HCT116 (cell line): ENCODE measurements at regions of chr5 and their contacts with region 1.

Region 1: DNA sequence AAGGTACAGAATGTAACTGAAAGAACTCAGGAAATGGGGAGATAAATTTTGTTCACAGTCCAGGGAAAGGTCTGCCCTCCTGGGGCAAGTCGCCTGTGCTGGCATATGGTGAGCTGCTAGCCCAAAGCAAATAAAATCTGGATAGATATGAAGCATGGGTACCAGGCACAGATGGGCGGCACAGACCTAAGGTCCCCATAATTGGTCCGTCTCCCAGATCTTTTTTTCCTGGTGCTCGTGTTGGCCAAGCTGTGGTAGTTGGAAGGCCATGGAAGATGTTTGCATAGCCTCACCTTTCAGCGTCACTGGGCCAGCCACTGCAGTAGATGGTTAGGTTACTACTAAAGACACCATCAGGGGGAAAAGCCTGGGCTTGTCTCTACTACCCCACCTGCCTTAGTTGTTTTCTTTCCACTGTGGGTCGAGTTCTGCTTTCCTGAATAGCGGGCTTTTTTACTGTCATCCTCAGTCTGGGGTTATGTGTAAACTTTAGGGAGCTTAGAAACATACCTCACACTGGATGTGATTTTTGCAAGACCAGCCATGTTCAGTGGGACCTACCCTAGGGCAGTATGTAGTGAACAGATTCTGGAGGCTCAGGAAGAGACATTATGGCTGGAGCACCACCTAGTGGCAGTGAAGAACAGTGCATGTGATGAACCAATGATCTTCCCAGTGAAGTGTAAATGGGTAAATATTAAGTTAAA is 24.2 kb upstream of the GLRX start:
- DNase-seq: no peak
- ATAC-seq: peak; percentile 96
- H3K4me3 ChIP-seq: no peak overlapping the region
- H3K27ac ChIP-seq: no peak overlapping the region
- H3K4me1 ChIP-seq: 0 out of 4 replicates have a peak, but pooled peaks cover 0 to 5% of the 10 kb centered on the region in 2 experiments
- H3K27me3 ChIP-seq: no peaks in the 10 kb centered on the region
- CTCF ChIP-seq: peak; percentile 85 to 98 (median 95)
- POLR2A ChIP-seq: no peak
- RAD21 ChIP-seq: peak; percentile 97

Region 2: GRCh38 chr5:94968507-94969095 is 878.1 kb before region 1 on chr5:
- CTCF ChIA-PET with region 1: interaction called, 3 read pairs
- POLR2A ChIA-PET with region 1: no interaction called
- RAD21 ChIA-PET with region 1: no interaction called
- intact Hi-C with region 1: loop called (anchors 1 kb)
- DNase-seq: peak; percentile 69
- ATAC-seq: peak; percentile 83
- H3K4me3 ChIP-seq: no peak overlapping the region
- H3K27ac ChIP-seq: no peak overlapping the region
- H3K4me1 ChIP-seq: no peaks in the 10 kb centered on the region; a peak in 1 of 4 replicates
- H3K27me3 ChIP-seq: no peaks in the 10 kb centered on the region
- CTCF ChIP-seq: peak; percentile 64 to 75 (median 73); a peak in 5 of 6 replicates
- POLR2A ChIP-seq: no peak
- RAD21 ChIP-seq: peak; percentile 79

Region 3: GRCh38 chr5:95283761-95284415 is 562.8 kb before region 1 on chr5:
- CTCF ChIA-PET with region 1: no interaction called
- POLR2A ChIA-PET with region 1: no interaction called
- RAD21 ChIA-PET with region 1: no interaction called
- intact Hi-C with region 1: loop called (anchors 10 kb)
- DNase-seq: no peak
- ATAC-seq: peak; percentile 63
- H3K4me3 ChIP-seq: peak overlapping the region; percentile 43 to 57
- H3K27ac ChIP-seq: no peak overlapping the region; the same call in 1 of the 2 replicates
- H3K4me1 ChIP-seq: peaks cover 5 to 25% of the 10 kb centered on the region in 2 experiments; a peak in 2 of 4 replicates
- H3K27me3 ChIP-seq: no peaks in the 10 kb centered on the region
- CTCF ChIP-seq: peak; percentile 12 to 33 (median 17); a peak in 3 of 6 replicates
- POLR2A ChIP-seq: no peak
- RAD21 ChIP-seq: peak; percentile 34; the same call in 1 of the 2 replicates

Region 4: GRCh38 chr5:95554647-95555548 is 291.8 kb before region 1 on chr5 and contains the starts of genes ARSK and SKIC3:
- CTCF ChIA-PET with region 1: no interaction called
- POLR2A ChIA-PET with region 1: no interaction called
- RAD21 ChIA-PET with region 1: no interaction called
- intact Hi-C with region 1: loop called (anchors 5 kb)
- DNase-seq: peak; percentile 98
- ATAC-seq: peak; percentile 92
- H3K4me3 ChIP-seq: peak within 1 kb of the TSS; percentile 87 to 88
- H3K27ac ChIP-seq: peak within 1 kb of the TSS; percentile 63
- H3K4me1 ChIP-seq: peaks cover 4 to 16% of the 10 kb centered on the region in 2 experiments; a peak in 3 of 4 replicates
- H3K27me3 ChIP-seq: no peaks in the 10 kb centered on the region
- CTCF ChIP-seq: 0 out of 6 replicates have a peak, but pooled peaks of 1 of the 3 experiments have one; percentile 11
- POLR2A ChIP-seq: peak; percentile 92
- RAD21 ChIP-seq: no peak
- total RNA-seq, gene ARSK: 4.6 TPM
- total RNA-seq, gene SKIC3: 35.1 TPM

Region 5: DNA sequence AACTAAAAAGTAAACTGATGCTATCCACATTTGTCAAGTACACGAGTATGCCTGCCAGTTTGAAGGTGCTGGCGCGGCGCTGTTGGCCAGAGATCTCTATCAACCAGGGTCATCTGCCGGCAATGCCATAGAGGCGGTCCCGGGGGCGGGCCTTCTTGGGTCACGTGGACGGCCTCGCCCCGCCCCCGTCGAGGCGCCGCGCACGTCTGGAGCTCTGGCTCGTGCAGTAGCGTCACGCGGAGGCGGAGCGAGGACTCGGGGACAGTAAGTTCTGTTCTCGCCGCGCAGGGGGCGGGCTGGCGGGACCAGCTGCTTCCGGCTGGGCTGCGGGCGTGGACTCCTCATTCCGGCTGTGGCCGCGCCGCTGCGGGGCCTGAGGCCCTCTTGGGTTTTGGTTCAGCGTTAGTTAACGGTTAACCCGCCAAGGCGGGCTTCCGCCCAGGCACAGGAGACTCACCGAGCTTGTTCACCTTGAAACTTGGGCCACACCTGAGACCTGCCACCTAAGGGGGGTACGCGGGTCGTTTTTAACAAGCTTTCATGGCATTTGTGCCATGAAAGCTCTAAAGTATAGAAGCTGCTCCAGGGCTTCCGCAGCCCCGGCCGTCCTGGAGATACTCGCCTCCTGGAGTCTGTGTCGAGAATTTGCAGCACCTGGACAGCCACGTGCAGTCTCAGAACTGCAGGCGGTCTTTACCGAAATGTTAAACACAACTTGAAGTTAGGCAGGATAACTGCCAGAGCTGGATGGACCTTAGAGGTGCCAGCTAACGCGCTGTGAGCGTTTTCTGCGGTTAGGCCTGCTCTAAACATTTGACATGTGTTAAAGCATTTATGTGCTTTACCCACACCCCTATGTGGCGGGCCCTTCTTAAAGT is 199.9 kb before region 1 on chr5 and contains the start of gene RFESD:
- CTCF ChIA-PET with region 1: interaction called, 8 read pairs
- POLR2A ChIA-PET with region 1: interaction called, 3 read pairs
- RAD21 ChIA-PET with region 1: interaction called, 3 to 4 read pairs
- intact Hi-C with region 1: loop called (anchors 1 kb)
- DNase-seq: peak; percentile 91
- ATAC-seq: peak; percentile 93
- H3K4me3 ChIP-seq: peak within 1 kb of the TSS; percentile 48 to 65
- H3K27ac ChIP-seq: peak within 1 kb of the TSS; percentile 76
- H3K4me1 ChIP-seq: peaks cover 9 to 33% of the 10 kb centered on the region in 2 experiments; a peak in 3 of 4 replicates
- H3K27me3 ChIP-seq: no peaks in the 10 kb centered on the region
- CTCF ChIP-seq: peak in 1 of 3 experiments; percentile 10; a peak in 1 of 6 replicates
- POLR2A ChIP-seq: peak; percentile 72
- RAD21 ChIP-seq: peak; percentile 34
- total RNA-seq, gene RFESD: 4.1 TPM

Region 6: DNA sequence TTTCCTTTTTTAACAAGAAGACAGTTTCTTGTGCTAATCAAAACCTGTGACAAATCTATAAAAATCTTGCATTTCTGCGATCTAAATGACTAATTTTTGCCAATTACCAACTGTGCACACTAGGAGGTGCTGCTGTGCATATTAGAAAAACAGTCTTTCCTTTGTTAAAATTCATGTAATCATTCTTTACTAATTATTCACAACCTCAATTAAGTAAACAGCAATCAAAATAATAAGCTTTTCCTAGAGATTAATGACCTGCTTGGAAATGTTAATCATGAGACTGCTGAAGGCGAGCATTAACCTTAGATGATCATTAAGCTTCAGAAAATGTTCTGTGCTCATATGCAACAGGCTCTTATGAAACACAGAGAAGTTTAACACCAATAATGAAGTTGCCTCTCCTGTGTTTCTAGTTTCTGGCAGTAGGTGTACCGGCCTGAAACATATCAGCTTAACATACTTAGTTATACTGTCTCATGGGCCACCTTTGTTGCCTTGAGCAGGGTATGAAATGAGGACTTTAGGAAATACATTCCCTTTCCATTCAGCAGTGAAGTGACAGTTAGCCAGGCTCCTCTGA is 182.4 kb before region 1 on chr5:
- CTCF ChIA-PET with region 1: interaction called, 3 read pairs
- POLR2A ChIA-PET with region 1: no interaction called
- RAD21 ChIA-PET with region 1: no interaction called
- intact Hi-C with region 1: loop called (anchors 5 kb)
- DNase-seq: peak; percentile 29
- ATAC-seq: peak; percentile 62
- H3K4me3 ChIP-seq: no peak overlapping the region
- H3K27ac ChIP-seq: no peak overlapping the region
- H3K4me1 ChIP-seq: peaks cover 0 to 9% of the 10 kb centered on the region in 2 experiments; a peak in 3 of 4 replicates
- H3K27me3 ChIP-seq: no peaks in the 10 kb centered on the region
- CTCF ChIP-seq: peak; percentile 61 to 87 (median 73); a peak in 5 of 6 replicates
- POLR2A ChIP-seq: no peak
- RAD21 ChIP-seq: peak; percentile 74

Region 7: DNA sequence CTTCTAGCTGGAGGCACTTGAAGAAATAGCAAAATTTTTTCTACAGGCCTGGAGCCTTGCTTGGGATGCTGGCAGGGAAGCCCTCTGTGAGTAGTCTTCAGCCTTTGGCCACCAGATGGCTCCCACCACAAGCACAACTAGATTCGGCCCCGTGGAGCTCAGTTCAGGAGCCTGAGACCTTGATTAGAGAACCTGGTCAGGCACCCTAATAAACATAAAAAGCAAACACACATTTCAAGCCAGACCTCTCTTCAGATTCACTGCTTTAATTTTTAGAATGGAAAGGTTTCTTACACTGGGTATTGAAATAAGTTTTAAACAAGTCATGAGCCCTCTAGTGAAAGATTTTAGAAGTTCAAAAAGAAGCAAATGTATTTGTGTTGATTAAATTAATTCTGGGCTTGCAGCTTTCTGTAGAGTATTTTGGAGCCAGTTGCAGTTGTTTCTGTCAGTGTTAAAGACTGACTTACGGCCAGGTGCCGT is 65.6 kb before region 1 on chr5:
- CTCF ChIA-PET with region 1: interaction called, 30 read pairs
- POLR2A ChIA-PET with region 1: no interaction called
- RAD21 ChIA-PET with region 1: interaction called in 1 of 2 experiments, 6 read pairs
- intact Hi-C with region 1: loop called (anchors 1 kb)
- DNase-seq: peak; percentile 62
- ATAC-seq: peak; percentile 99
- H3K4me3 ChIP-seq: no peak overlapping the region
- H3K27ac ChIP-seq: no peak overlapping the region
- H3K4me1 ChIP-seq: no peaks in the 10 kb centered on the region
- H3K27me3 ChIP-seq: no peaks in the 10 kb centered on the region
- CTCF ChIP-seq: peak; percentile 88 to 99 (median 95)
- POLR2A ChIP-seq: no peak
- RAD21 ChIP-seq: peak; percentile 94